ENCODE measurements at regions of chr1 and their contacts with region 1.

Region 1: GRCh38 chr1:151024540-151025146 is 11.7 kb upstream of the BNIPL start:
- DNase-seq: peak; percentile 70 to 82 (median 71)
- H3K4me3 ChIP-seq: no peak overlapping the region
- H3K4me3 Mint-ChIP-seq: peak overlapping the region; percentile 51 to 66
- H3K27ac ChIP-seq: no peak overlapping the region
- H3K27ac Mint-ChIP-seq: peak overlapping the region in 2 of 7 donors; percentile 54 to 70
- H3K4me1 ChIP-seq: peaks cover 4 to 7% of the 10 kb centered on the region in 2 donors
- H3K4me1 Mint-ChIP-seq: peaks cover 3% of the 10 kb centered on the region
- H3K27me3 ChIP-seq: no peaks in the 10 kb centered on the region
- H3K27me3 Mint-ChIP-seq: no peaks in the 10 kb centered on the region
- CTCF ChIP-seq: peak; percentile 75

Region 2: GRCh38 chr1:150841626-150842025 is 183.0 kb before region 1 on chr1:
- intact Hi-C with region 1: no loop called
- DNase-seq: no peak
- H3K4me3 ChIP-seq: no peak overlapping the region
- H3K4me3 Mint-ChIP-seq: no peak overlapping the region
- H3K27ac ChIP-seq: peak overlapping the region in 1 of 2 donors; percentile 58
- H3K27ac Mint-ChIP-seq: peak overlapping the region in 4 of 7 donors; percentile 7 to 33 (median 25)
- H3K4me1 ChIP-seq: peaks cover 34 to 35% of the 10 kb centered on the region in 2 donors
- H3K4me1 Mint-ChIP-seq: peaks cover 37% of the 10 kb centered on the region
- H3K27me3 ChIP-seq: no peaks in the 10 kb centered on the region
- H3K27me3 Mint-ChIP-seq: no peaks in the 10 kb centered on the region
- CTCF ChIP-seq: no peak

Region 3: GRCh38 chr1:151059078-151059907 is 34.6 kb after region 1 on chr1 and contains the start of gene CDC42SE1:
- intact Hi-C with region 1: loop called in 1 of 2 experiments (anchors 5 kb)
- DNase-seq: peak; percentile 84 to 90 (median 89)
- H3K4me3 ChIP-seq: peak within 1 kb of the TSS; percentile 79 to 99 (median 99)
- H3K4me3 Mint-ChIP-seq: peak within 1 kb of the TSS; percentile 99
- H3K27ac ChIP-seq: peak within 1 kb of the TSS; percentile 93 to 94
- H3K27ac Mint-ChIP-seq: peak within 1 kb of the TSS; percentile 98 to 100 (median 99)
- H3K4me1 ChIP-seq: peaks cover 42 to 50% of the 10 kb centered on the region in 2 donors
- H3K4me1 Mint-ChIP-seq: peaks cover 51% of the 10 kb centered on the region
- H3K27me3 ChIP-seq: no peaks in the 10 kb centered on the region
- H3K27me3 Mint-ChIP-seq: peaks cover 2 to 5% (median 3%) of the 10 kb centered on the region in 3 donors
- CTCF ChIP-seq: peak; percentile 98
- polyA plus RNA-seq, gene CDC42SE1: 62.1 to 302 (median 75.7) TPM

Region 4: GRCh38 chr1:151156515-151156819 is 131.8 kb after region 1 on chr1 and contains the start of gene TNFAIP8L2:
- intact Hi-C with region 1: loop called in 1 of 2 experiments (anchors 5 kb)
- DNase-seq: peak; percentile 64 to 72 (median 64)
- H3K4me3 ChIP-seq: peak within 1 kb of the TSS; percentile 74 to 91 (median 91)
- H3K4me3 Mint-ChIP-seq: peak within 1 kb of the TSS; percentile 98
- H3K27ac ChIP-seq: peak within 1 kb of the TSS; percentile 60 to 79
- H3K27ac Mint-ChIP-seq: peak within 1 kb of the TSS; percentile 90 to 96 (median 95)
- H3K4me1 ChIP-seq: peaks cover 51 to 60% of the 10 kb centered on the region in 2 donors
- H3K4me1 Mint-ChIP-seq: peaks cover 49% of the 10 kb centered on the region
- H3K27me3 ChIP-seq: no peaks in the 10 kb centered on the region
- H3K27me3 Mint-ChIP-seq: peaks cover 0 to 7% (median 0%) of the 10 kb centered on the region in 3 donors
- CTCF ChIP-seq: no peak
- polyA plus RNA-seq, gene TNFAIP8L2: 50.3 to 104 (median 103) TPM

Measured in CD14-positive monocyte (primary cell).